Posterior cingulate gyrus (tissue), 11 donors: ENCODE measurements at regions of chr2 and their contacts with region 1.

Region 1: GRCh38 chr2:60756191-60757041 is at the start of gene PAPOLG:
- DNase-seq: peak; percentile 87 to 99 (median 93)

Region 2: GRCh38 chr2:60152226-60152833 is 604.1 kb before region 1 on chr2:
- intact Hi-C with region 1: no loop called
- DNase-seq: no peak

Region 3: DNA sequence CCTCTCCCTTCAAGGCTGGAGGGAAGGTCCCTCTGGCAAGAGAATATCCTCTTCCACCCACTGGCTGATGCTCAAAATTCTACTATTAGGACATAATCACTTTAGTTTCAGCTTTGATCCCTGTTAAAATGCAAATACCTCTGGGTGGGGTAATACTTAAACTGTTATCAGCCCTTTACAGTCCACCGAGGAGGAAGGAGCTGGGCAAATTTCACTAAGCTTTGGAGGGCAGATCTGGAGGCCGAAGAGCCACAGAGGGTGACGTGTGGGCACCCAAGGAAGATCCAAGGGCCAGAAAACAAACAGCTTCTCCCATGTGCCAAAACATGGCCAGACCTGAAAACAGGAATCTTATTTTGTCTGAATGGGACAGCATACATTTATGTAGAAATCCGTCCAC is 128.4 kb before region 1 on chr2:
- intact Hi-C with region 1: no loop called
- DNase-seq: no peak

Region 4: DNA sequence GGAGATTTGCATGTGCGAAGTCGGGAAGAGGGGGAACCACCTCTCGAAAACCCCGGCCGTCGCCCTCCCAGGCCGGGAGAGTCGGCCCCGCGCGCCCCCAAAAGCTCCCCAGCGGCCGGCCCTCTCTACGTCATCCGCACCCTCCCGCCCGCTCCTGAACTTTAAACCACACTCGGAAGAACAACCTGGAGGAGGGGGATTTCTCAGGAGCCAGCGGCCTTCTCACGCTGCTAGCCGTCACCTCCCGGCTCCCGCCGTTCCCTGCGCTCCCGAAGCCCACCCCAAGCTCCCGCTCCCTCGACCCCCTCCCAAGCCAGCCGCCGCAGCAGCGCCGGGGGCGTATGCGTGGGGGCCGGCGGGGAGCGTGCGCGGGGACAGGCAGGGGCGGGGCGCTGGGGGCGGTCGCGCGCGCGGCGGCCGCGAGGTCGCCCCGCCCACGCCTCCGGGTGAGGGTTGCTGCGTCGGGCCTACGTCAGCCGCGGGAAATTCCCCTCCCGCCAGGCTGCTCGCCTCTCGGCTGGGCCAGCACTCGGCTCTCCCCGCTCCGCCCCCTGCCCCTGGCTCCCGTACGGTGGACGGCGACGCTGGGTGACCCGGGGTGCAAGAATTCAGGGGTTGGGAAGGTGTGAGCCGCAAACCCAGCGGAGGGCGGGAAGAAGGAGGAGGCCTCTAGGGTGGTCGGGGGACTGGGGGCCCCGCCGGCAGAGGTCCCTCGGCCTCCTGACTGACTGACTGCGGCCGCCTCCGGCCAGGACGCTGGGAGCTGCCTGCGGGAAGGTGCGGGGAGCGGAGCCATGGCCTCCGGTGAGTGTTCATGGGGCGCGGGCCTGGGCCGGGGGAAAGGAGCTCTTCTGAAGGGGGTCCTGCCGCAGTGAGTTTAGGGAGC is 124.9 kb after region 1 on chr2 and contains the start of gene REL:
- intact Hi-C with region 1: loop called (anchors 5 kb)
- DNase-seq: peak; percentile 74 to 98 (median 84)

Region 5: GRCh38 chr2:61689568-61689967 is 933.2 kb after region 1 on chr2:
- intact Hi-C with region 1: no loop called
- DNase-seq: no peak